ENCODE measurements at regions of chr11 and their contacts with region 1.

Region 1: GRCh38 chr11:64742889-64743590 is 902 bp downstream of the RASGRP2 start:
- DNase-seq: no peak
- H3K4me3 ChIP-seq: peak overlapping the region; percentile 52
- H3K27me3 ChIP-seq: peaks cover 38% of the 10 kb centered on the region
- CTCF ChIP-seq: peak; percentile 73

Region 2: DNA sequence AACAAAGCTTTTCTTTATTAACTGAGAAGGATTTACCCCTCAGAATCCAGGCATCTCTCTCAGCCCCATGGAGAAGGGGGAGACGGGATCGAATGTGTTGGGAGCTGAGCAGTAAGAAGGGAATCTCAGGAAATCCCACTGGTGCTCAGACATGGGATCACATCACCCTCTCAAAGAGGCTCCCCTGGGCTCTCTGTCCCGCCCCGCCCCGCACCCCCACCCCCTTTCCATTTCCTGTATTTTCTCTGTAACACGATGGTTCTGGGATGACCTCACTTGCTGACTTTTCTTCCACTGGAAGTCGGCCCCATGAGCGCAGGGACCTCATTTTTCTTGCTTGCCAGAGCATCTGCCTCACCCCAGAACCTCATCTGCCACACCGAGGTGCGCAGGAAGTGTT is 284.0 kb before region 1 on chr11:
- CTCF ChIA-PET with region 1: no interaction called
- POLR2A ChIA-PET with region 1: no interaction called
- DNase-seq: no peak
- H3K4me3 ChIP-seq: no peak overlapping the region
- H3K27me3 ChIP-seq: peaks cover 5% of the 10 kb centered on the region
- CTCF ChIP-seq: no peak

Region 3: DNA sequence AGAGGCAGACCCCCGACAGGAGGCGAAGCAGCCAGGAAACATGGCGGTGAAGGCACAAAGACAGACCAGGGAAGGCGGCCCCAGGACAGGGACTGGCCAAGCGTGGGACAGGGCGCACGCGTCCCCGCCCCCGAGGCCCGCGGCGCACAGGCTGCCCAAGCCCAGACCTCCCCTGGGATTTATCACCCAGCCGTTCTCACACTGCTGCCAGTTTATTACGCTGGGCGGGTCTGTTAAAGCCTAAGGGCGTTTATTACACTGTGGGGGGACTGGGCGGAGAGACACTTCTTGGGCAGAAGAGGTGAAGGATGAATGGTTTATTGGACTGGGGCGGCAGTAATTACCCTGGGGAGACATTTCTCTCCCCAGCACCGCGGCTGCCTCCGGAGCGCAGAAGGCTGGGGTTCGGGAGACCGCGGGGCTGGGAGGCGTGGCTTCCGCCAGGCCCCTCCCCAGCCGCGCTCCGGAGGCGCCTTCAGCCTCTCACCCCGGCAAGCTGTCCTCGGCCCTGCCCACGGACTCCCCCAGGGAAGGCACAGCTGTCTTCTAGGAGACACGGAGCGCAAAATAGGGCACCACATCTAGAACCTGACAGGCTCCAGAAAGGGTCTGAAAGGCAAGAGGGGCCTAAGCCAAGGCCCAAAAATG is 104.9 kb before region 1 on chr11:
- CTCF ChIA-PET with region 1: no interaction called
- POLR2A ChIA-PET with region 1: no interaction called
- DNase-seq: no peak
- H3K4me3 ChIP-seq: no peak overlapping the region
- H3K27me3 ChIP-seq: peaks cover 43% of the 10 kb centered on the region
- CTCF ChIP-seq: no peak

Region 4: DNA sequence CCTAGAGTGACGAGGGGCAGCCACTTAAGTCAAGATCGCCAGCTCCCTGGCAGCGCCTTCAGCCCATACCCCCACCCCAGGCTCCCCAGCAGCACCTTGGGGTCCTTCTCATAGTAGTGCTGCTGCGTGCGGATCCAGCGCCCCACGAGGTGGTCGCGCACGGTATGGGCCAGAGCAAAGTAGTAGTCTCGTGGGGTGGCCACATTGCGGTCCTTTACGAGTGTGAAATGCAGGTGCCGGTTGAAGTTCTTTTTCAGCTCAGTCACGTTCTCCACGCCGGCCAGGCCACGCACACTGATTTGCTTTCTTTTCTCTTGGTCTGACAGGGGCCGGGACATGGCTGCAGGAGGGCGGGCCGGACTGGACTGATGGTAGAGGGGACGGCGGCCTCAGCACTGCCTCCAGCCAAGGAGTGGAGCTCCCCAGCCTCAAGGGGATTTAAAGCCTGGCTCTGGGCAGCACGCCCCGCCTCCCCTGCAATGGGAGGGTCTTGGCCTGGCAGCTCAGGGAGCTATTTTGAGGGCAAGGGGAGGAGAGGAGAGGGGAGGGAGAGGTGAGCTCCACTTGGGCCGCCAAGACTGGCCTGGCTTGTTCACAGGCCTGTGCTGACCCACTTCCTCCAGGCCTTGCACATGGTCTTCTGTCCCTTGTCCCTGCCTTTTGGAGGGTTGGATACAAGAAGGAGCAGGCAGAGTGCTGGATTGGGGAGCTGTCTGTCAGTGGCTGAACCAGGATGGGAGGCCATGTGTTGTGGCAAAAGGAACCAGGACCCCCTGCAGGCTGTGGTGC is 16.7 kb after region 1 on chr11 and contains the start of gene PYGM:
- CTCF ChIA-PET with region 1: interaction called, 10 read pairs
- POLR2A ChIA-PET with region 1: no interaction called
- DNase-seq: no peak
- H3K4me3 ChIP-seq: no peak within 1 kb of the TSS
- H3K27me3 ChIP-seq: no peaks in the 10 kb centered on the region
- CTCF ChIP-seq: no peak
- polyA plus RNA-seq, gene PYGM: 0.10 TPM in 2 replicates

Measured in BJ (cell line).